Naive thymus-derived CD4-positive, alpha-beta T cell (primary cell): ENCODE measurements at regions of chr20 and their contacts with region 1.

Region 1: GRCh38 chr20:37178839-37179670 is at the starts of genes MROH8 and RPN2:
- DNase-seq: peak; percentile 83 to 95 (median 92)
- ATAC-seq: peak; percentile 96
- H3K4me3 ChIP-seq: peak within 1 kb of the TSS; percentile 85
- H3K4me3 Mint-ChIP-seq: peak within 1 kb of the TSS; percentile 89 to 99 (median 96)
- H3K27ac ChIP-seq: peak within 1 kb of the TSS; percentile 87
- H3K27ac Mint-ChIP-seq: peak within 1 kb of the TSS; percentile 94 to 99 (median 97)
- H3K4me1 ChIP-seq: peaks cover 13 to 15% of the 10 kb centered on the region in 2 donors
- H3K4me1 Mint-ChIP-seq: peaks cover 34 to 48% (median 36%) of the 10 kb centered on the region in 7 donors
- H3K27me3 ChIP-seq: no peaks in the 10 kb centered on the region
- H3K27me3 Mint-ChIP-seq: peaks cover 0 to 6% (median 0%) of the 10 kb centered on the region in 5 donors
- total RNA-seq, gene MROH8: 1.2 to 1.9 (median 1.6) TPM
- total RNA-seq, gene RPN2: 88.7 to 222 (median 108) TPM

Region 2: GRCh38 chr20:36460648-36461599 is 718.1 kb before region 1 on chr20:
- CTCF ChIA-PET with region 1: no interaction called
- POLR2A ChIA-PET with region 1: no interaction called
- intact Hi-C with region 1: loop called in 1 of 2 experiments (anchors 2 kb)
- DNase-seq: peak; percentile 76 to 89 (median 86)
- ATAC-seq: peak; percentile 93
- H3K4me3 ChIP-seq: peak overlapping the region; percentile 73
- H3K4me3 Mint-ChIP-seq: peak overlapping the region; percentile 74 to 97 (median 83)
- H3K27ac ChIP-seq: peak overlapping the region; percentile 85
- H3K27ac Mint-ChIP-seq: peak overlapping the region; percentile 88 to 97 (median 95)
- H3K4me1 ChIP-seq: peaks cover 38 to 39% of the 10 kb centered on the region in 2 donors
- H3K4me1 Mint-ChIP-seq: peaks cover 34 to 51% (median 45%) of the 10 kb centered on the region in 7 donors
- H3K27me3 ChIP-seq: no peaks in the 10 kb centered on the region
- H3K27me3 Mint-ChIP-seq: peaks cover 0 to 6% (median 0%) of the 10 kb centered on the region in 5 donors

Region 3: DNA sequence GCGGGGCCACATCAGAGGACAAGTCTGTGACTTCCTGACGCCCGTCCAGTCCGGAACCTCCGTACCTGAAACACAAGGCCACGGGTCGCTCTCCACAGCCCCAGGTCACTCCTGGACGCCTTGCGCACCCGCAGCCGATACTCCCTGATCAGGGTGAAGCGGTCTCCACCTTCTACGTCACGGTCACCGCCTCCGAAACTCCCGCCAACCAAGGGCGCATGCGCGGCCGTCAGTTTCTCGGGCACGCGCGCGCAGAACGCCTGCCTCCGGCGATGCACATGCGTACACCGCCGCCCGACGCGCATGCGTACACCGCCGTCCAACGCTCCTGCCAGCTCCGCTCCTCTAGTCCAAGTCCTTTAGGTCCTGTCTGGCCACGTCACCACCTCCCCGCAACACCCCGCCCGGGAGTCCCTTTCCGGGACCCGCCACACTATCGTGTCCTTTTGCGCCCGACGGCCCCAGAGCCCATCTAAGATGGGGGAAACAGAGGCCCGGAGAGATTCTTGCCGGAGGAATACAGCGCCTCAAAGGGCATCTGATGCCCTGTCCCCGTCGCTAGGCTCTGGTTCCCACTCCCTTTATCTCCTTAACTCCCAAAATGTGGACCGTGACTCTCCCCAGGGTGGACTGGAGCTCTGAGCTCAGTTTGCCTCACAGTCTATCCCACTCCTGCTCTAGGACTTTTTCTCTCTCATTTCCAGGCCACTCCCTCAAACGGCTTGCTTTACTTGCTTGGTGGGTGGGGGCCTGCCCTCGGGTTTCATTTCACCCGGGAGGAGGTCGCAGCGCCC is 405.3 kb before region 1 on chr20 and contains the start of gene DSN1:
- CTCF ChIA-PET with region 1: interaction called, 3 read pairs
- POLR2A ChIA-PET with region 1: no interaction called
- intact Hi-C with region 1: loop called in 1 of 2 experiments (anchors 10 kb)
- DNase-seq: peak; percentile 94 to 100 (median 97)
- ATAC-seq: peak; percentile 90
- H3K4me3 ChIP-seq: peak within 1 kb of the TSS; percentile 96
- H3K4me3 Mint-ChIP-seq: peak within 1 kb of the TSS; percentile 83 to 98 (median 95)
- H3K27ac ChIP-seq: peak within 1 kb of the TSS; percentile 93
- H3K27ac Mint-ChIP-seq: peak within 1 kb of the TSS; percentile 90 to 100 (median 97)
- H3K4me1 ChIP-seq: peaks cover 8 to 13% of the 10 kb centered on the region in 2 donors
- H3K4me1 Mint-ChIP-seq: peaks cover 8 to 36% (median 27%) of the 10 kb centered on the region in 7 donors
- H3K27me3 ChIP-seq: no peaks in the 10 kb centered on the region
- H3K27me3 Mint-ChIP-seq: peaks cover 0 to 2% (median 0%) of the 10 kb centered on the region in 5 donors
- total RNA-seq, gene DSN1: 9.2 to 27.5 (median 13.4) TPM

Region 4: DNA sequence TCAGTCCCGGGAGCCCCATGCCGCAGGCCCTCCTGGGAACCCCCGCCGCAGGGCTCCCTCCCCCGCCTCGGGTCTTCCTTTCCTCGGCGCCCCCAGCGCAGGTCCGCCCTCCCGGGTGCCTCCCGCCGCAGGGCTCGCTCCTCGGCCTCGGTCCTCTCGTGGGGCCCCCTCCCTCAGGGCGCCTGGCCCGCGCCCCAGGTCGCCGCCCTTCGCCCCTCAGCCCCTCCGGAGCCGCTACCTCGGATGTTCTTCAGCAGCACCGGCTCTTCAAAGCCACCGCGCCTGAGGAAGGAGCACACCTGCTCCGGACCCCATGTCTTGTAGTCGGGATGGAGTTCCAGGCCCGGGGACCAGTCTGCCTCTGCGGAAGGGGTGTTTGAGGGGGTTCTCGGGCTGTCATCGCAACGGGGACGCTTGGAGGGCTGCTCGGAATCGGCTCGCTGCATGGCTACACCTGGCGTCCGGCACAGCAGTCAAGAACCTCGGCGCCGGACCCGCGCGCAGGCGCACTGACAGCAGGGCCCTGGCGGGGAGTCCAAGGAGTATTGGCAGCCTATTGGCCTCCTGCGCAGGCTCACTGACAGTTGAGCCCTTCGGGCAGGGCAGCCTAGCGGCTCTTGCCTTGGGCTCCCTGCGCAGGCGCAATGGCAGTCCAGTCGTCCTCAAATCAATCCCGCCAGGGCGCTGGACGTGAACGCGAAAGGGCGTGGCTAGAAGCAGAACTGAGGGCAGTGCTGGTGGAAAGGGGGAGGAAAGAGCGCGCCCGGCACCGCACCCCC is 227.7 kb before region 1 on chr20 and contains the start of gene SAMHD1:
- CTCF ChIA-PET with region 1: no interaction called
- POLR2A ChIA-PET with region 1: interaction called, 5 read pairs
- intact Hi-C with region 1: loop called (anchors 2 to 5 kb)
- DNase-seq: peak; percentile 72 to 93 (median 81)
- ATAC-seq: peak; percentile 86
- H3K4me3 ChIP-seq: peak within 1 kb of the TSS; percentile 94
- H3K4me3 Mint-ChIP-seq: peak within 1 kb of the TSS; percentile 93 to 99 (median 98)
- H3K27ac ChIP-seq: peak within 1 kb of the TSS; percentile 97
- H3K27ac Mint-ChIP-seq: peak within 1 kb of the TSS; percentile 96 to 99 (median 98)
- H3K4me1 ChIP-seq: peaks cover 40 to 45% of the 10 kb centered on the region in 2 donors
- H3K4me1 Mint-ChIP-seq: peaks cover 28 to 50% (median 37%) of the 10 kb centered on the region in 7 donors
- H3K27me3 ChIP-seq: no peaks in the 10 kb centered on the region
- H3K27me3 Mint-ChIP-seq: no peaks in the 10 kb centered on the region
- total RNA-seq, gene SAMHD1: 271 to 393 (median 338) TPM

Region 5: DNA sequence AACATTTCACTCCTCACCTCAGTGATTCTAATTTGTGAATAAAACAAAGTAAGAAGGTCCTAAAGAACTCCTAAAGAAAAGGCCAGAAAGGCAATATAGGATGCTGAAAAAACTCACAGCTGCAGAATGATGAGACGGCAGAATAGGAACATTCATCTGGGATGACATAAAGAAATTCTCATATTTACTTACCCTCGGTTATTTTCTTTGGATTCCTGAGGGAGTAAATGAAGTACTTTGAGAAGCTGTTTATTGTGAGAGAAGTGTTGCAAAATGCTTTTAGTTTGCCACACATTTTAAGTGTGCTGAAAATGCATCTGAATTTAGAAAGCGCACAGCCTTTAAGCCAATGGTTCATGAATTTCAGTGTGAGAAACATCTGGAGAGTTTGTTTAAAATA is 47.6 kb before region 1 on chr20:
- CTCF ChIA-PET with region 1: no interaction called
- POLR2A ChIA-PET with region 1: no interaction called
- intact Hi-C with region 1: no loop called
- DNase-seq: no peak
- ATAC-seq: no peak
- H3K4me3 ChIP-seq: no peak overlapping the region
- H3K4me3 Mint-ChIP-seq: no peak overlapping the region
- H3K27ac ChIP-seq: no peak overlapping the region
- H3K27ac Mint-ChIP-seq: no peak overlapping the region
- H3K4me1 ChIP-seq: peaks cover 0 to under 1% of the 10 kb centered on the region in 2 donors
- H3K4me1 Mint-ChIP-seq: peaks cover 0 to 4% (median 0%) of the 10 kb centered on the region in 7 donors
- H3K27me3 ChIP-seq: no peaks in the 10 kb centered on the region
- H3K27me3 Mint-ChIP-seq: peaks cover 0 to 18% (median 0%) of the 10 kb centered on the region in 5 donors

Region 6: DNA sequence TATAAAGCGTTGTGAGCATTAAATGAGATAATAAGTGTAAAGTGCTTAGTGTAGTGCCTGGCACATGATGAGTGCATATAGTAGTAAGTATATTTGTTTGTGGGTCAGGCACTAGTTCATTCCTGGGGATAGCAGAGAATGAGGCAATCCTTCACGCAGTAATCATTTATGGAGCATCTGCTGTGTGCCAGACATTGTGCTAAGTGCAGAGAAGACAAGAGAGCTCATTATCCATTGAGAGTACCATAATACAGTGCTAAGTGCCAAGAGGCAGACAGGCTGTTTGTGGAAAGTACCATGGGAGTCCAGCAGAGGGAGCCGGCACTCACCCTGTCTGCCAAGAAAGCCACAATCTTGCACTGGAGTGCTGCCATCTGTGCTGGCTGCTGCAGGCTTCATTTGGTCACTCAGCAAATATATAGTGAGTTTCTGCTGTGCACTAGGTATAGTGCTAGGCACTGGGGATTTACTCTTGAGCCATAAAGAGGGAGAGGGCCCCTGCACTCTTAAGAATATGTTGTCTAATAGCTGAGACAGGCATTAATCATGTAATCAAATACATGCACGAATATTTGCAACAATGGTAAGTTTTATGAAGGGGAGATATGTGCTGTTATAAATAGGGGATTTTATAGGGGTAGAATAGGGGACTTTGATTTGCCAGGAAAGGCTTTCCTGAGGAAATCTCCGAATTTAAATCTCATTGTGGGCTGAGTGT is 13.2 kb after region 1 on chr20:
- CTCF ChIA-PET with region 1: interaction called, 53 read pairs
- POLR2A ChIA-PET with region 1: interaction called, 46 read pairs
- intact Hi-C with region 1: loop called (anchors 1 kb)
- DNase-seq: peak; percentile 31 to 71 (median 60)
- ATAC-seq: peak; percentile 89
- H3K4me3 ChIP-seq: no peak overlapping the region
- H3K4me3 Mint-ChIP-seq: peak overlapping the region in 3 of 10 donors; percentile 7 to 44 (median 13)
- H3K27ac ChIP-seq: no peak overlapping the region
- H3K27ac Mint-ChIP-seq: peak overlapping the region in 8 of 9 donors; percentile 36 to 94 (median 66)
- H3K4me1 ChIP-seq: peaks cover 36 to 46% of the 10 kb centered on the region in 2 donors
- H3K4me1 Mint-ChIP-seq: peaks cover 64 to 84% (median 80%) of the 10 kb centered on the region in 7 donors
- H3K27me3 ChIP-seq: no peaks in the 10 kb centered on the region
- H3K27me3 Mint-ChIP-seq: no peaks in the 10 kb centered on the region

Region 7: GRCh38 chr20:37527638-37528441 is 348.8 kb after region 1 on chr20 and contains the start of gene BLCAP:
- CTCF ChIA-PET with region 1: no interaction called
- POLR2A ChIA-PET with region 1: interaction called, 11 read pairs
- intact Hi-C with region 1: loop called (anchors 1 kb)
- DNase-seq: peak; percentile 89 to 98 (median 96)
- ATAC-seq: peak; percentile 96
- H3K4me3 ChIP-seq: peak within 1 kb of the TSS; percentile 86
- H3K4me3 Mint-ChIP-seq: peak within 1 kb of the TSS; percentile 81 to 95 (median 90)
- H3K27ac ChIP-seq: peak within 1 kb of the TSS; percentile 99
- H3K27ac Mint-ChIP-seq: peak within 1 kb of the TSS; percentile 98 to 100 (median 99)
- H3K4me1 ChIP-seq: peaks cover 30 to 35% of the 10 kb centered on the region in 2 donors
- H3K4me1 Mint-ChIP-seq: peaks cover 41 to 52% (median 46%) of the 10 kb centered on the region in 7 donors
- H3K27me3 ChIP-seq: no peaks in the 10 kb centered on the region
- H3K27me3 Mint-ChIP-seq: peaks cover 0 to 2% (median 0%) of the 10 kb centered on the region in 5 donors
- total RNA-seq, gene BLCAP: 42.1 to 94.7 (median 73.4) TPM